Heart right ventricle (tissue), 16 donors: ENCODE measurements at regions of chr7 and their contacts with region 1.

Region 1: DNA sequence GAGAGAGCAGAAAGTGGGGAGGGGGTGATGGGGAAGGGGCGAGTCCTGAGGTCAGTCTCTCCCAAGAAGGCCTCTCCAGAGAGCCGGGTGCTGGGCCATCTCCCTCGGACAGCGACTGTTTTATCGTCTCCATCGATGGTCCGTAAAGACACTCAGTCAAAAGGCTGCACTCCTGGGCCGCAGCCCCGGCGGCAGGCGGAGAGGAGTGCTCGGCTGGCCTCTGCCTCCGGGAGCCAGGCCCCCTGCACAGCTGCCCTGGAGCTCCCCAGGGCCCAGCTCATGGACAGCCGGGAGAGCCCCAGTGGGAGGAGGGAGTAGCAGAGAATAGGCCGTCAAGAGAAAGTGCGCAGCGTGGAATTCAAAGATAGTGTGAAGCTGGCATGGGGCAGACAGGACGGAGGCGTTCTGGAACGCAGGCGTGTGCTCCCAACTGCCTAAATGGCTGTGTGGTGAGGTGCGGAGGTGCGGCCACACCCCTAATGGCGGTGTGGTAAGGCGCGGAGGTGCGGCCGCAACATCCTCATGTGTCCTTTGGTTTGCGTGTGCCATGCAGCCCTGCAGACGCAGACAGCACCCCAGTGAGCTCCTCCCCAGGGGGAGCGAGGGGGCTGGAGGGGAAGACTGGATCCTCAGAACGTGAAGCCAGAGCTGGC is 477.5 kb upstream of the FOXK1 start:
- DNase-seq: no peak
- ATAC-seq: peak in 5 of 8 donors; percentile 47 to 72 (median 62)
- H3K4me3 ChIP-seq: peak overlapping the region in 2 of 10 donors; percentile 10 to 17
- H3K27ac ChIP-seq: no peak overlapping the region
- H3K4me1 ChIP-seq: no peaks in the 10 kb centered on the region
- H3K27me3 ChIP-seq: peaks cover 0 to 3% (median 0%) of the 10 kb centered on the region in 7 donors
- CTCF ChIP-seq: no peak

Region 2: GRCh38 chr7:2894118-2894940 is 1310.3 kb before region 1 on chr7:
- intact Hi-C with region 1: loop called in 1 of 10 experiments (anchors 10 kb)
- DNase-seq: no peak
- ATAC-seq: no peak
- H3K4me3 ChIP-seq: peak overlapping the region in 1 of 10 donors; percentile 32
- H3K27ac ChIP-seq: peak overlapping the region in 1 of 10 donors; percentile 14
- H3K4me1 ChIP-seq: no peaks in the 10 kb centered on the region
- H3K27me3 ChIP-seq: peaks cover 0 to 42% (median 18%) of the 10 kb centered on the region in 7 donors
- CTCF ChIP-seq: no peak